PC-9 (cell line): ENCODE measurements at regions of chr1 and their contacts with region 1.

Region 1: DNA sequence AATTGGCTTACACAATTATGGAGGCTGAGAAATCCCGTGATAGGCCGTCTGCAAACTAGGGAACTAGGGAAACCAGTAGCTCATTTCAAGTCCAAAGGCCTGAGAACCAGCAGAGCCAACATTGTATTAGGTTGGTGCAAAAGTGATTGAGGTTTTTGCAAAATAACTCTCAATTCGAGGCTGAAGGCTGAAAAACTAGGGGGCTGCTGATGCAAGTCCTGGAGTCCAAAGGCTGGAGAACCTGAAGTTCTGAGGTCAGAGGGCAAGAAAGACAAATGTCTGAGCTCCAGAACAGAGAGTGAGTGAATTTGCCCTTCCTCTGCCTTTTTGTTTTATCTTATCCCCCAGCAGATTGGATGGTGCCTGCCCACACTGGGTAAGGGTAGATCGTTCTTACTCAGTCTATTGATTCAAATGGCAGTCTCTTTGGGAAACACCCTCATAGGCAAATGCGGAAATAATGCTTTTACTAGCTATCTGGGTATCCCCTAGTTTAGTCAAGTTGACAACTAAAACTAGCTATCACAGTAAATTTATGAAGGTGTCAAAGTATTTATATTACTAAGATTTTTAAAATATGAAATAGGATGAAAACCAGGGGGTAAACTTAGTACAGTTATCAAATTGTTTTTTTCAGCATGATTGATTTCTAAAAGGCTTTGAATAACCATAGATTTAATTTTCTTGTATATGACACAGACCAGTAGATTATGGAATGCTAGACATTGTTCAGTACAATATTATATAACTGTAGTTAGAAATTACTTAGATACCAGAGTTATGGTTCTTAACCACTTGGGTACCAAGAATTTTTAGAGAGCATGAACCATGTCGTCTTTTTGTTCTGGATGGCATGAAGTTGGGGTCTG is 15.4 kb downstream of the RABGAP1L start:
- DNase-seq: no peak
- H3K4me3 ChIP-seq: no peak overlapping the region
- H3K27ac ChIP-seq: no peak overlapping the region
- H3K4me1 ChIP-seq: no peaks in the 10 kb centered on the region
- H3K27me3 ChIP-seq: no peaks in the 10 kb centered on the region
- CTCF ChIP-seq: no peak

Region 2: DNA sequence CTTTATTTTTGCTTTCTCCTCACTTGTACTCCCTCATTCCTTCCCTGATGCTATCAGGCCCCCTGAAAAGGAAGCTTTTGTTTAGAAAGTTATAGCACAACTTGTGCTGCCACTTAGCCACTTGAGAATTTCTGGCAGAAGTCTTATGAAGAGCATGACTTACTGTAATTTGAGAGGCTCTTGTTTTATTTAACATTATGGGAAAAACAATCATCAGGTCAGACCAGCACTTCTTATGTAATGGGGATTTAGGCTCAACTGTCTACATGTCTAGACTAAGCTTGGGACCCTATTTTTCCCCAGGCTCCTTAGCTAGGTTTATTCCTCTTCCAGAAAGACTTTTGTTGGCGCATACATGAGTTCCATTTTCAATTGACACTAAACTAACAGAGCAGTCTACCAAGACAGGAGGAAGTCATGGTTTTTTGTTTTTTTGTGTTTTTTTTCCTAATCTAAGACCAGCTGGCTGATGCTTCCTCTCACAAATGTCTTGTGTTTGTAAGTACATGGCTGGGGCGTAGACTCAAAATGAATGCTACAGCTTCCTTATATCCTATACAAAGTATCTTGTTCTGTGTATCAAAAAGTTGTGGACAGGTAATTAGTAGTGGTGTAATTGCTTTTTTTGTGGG is 999.1 kb before region 1 on chr1:
- CTCF ChIA-PET with region 1: no interaction called
- POLR2A ChIA-PET with region 1: no interaction called
- intact Hi-C with region 1: no loop called
- DNase-seq: no peak
- H3K4me3 ChIP-seq: no peak overlapping the region
- H3K27ac ChIP-seq: no peak overlapping the region
- H3K4me1 ChIP-seq: no peaks in the 10 kb centered on the region
- H3K27me3 ChIP-seq: no peaks in the 10 kb centered on the region
- CTCF ChIP-seq: no peak

Region 3: DNA sequence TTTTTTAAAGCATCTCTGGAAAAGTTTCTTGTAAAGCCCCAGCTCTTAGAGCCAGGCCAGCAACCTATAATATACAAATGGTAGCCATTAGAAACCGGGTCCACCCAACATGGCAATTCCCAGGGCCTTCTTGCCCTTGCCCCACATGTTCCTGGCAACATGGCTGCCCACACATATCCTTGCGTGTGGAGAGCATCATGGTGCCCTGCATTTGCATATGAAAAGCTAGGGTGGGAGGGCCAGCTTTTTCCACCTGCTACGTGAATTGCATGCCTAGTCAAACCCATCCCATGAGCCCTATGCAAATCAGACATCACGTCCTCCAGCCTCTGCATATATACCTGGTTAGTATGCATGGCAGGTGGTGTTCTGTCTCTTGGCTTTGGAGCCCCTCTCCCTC is 72.8 kb after region 1 on chr1:
- CTCF ChIA-PET with region 1: no interaction called
- POLR2A ChIA-PET with region 1: interaction called, 10 read pairs
- intact Hi-C with region 1: no loop called
- DNase-seq: no peak
- H3K4me3 ChIP-seq: no peak overlapping the region
- H3K27ac ChIP-seq: no peak overlapping the region
- H3K4me1 ChIP-seq: no peaks in the 10 kb centered on the region
- H3K27me3 ChIP-seq: no peaks in the 10 kb centered on the region
- CTCF ChIP-seq: no peak